CD14-positive monocyte (primary cell): ENCODE measurements at regions of chr10 and their contacts with region 1.

Region 1: DNA sequence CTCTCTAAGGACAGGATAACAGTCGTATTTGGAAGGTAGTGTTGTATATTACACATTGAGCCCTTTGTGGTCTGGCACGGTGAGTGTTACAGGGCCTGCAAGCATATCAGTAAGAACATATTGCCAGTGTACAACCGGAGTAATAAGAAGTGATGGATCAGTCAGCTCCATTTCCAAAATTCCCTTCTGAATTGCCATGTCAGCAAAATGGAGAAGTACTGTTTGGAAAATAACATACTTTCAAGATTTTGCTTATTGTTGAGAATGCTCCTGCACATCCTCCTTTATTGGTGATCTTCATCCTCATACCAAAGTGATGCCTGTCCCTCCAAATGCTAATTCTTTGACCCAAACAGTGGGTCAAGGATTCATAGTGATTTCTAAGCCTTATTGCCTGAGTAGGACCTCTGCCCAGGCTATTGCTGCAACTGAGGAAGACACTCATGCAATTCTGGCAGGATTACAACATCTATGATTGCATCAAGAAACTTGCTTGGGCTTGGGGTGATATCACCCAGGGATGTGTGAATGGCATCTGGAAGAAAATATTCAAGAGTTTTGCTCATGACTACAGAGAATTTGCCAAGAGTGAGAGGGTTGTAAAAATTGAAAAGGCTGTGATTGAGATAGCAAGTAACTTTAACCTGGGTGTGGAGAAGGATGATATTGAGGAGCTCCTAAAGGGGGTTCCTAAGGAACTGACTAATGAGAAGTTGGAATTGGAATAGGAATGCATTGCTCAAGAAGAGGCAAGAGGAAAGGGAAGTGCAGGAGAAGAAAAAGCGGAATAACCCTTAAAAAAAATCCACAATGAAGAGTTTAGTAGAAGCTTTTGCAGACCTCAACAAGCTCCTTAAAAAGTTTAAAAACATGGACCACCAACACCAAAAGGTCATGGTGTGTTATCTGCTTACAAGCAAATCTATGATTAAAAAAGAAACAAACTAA is 452.2 kb upstream of the SORCS1 start:
- DNase-seq: peak; percentile 77 to 90 (median 80)
- H3K4me3 ChIP-seq: peak overlapping the region in 1 of 3 experiments; percentile 50
- H3K4me3 Mint-ChIP-seq: peak overlapping the region in 1 of 2 donors; percentile 62
- H3K27ac ChIP-seq: peak overlapping the region in 1 of 2 donors; percentile 75
- H3K27ac Mint-ChIP-seq: peak overlapping the region; percentile 74 to 93 (median 89)
- H3K4me1 ChIP-seq: peaks cover 41 to 44% of the 10 kb centered on the region in 2 donors
- H3K4me1 Mint-ChIP-seq: peaks cover 31% of the 10 kb centered on the region
- H3K27me3 ChIP-seq: no peaks in the 10 kb centered on the region
- H3K27me3 Mint-ChIP-seq: peaks cover 0 to 2% (median 2%) of the 10 kb centered on the region in 3 donors
- CTCF ChIP-seq: no peak

Region 2: DNA sequence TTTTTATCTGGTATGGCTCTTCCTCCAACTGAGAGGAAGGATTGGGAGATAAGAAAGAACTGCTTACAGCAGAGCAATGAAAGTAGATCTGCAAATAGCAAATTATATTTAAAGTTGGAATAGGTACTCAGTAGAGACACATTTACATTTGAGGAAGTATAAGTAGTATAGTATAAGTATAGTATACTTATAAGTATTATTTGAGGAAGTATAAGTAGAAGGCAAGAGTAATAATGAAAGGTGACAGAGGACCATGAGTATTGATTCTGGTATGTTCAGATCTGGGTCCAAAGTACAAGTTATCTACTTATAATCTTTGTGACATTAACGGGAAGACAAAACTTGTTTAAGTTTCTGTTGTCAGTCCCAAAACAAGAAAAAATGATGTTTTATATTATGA is 75.3 kb after region 1 on chr10:
- intact Hi-C with region 1: loop called in 1 of 2 experiments (anchors 5 kb)
- DNase-seq: peak; percentile 11 to 45 (median 34)
- H3K4me3 ChIP-seq: peak overlapping the region in 1 of 3 experiments; percentile 24
- H3K4me3 Mint-ChIP-seq: peak overlapping the region in 1 of 2 donors; percentile 26
- H3K27ac ChIP-seq: no peak overlapping the region
- H3K27ac Mint-ChIP-seq: peak overlapping the region in 3 of 7 donors; percentile 30 to 56 (median 46)
- H3K4me1 ChIP-seq: peaks cover 47 to 62% of the 10 kb centered on the region in 2 donors
- H3K4me1 Mint-ChIP-seq: peaks cover 62% of the 10 kb centered on the region
- H3K27me3 ChIP-seq: no peaks in the 10 kb centered on the region
- H3K27me3 Mint-ChIP-seq: peaks cover 0 to 3% (median 0%) of the 10 kb centered on the region in 3 donors
- CTCF ChIP-seq: no peak